ENCODE measurements at regions of chr6 and their contacts with region 1.

Region 1: DNA sequence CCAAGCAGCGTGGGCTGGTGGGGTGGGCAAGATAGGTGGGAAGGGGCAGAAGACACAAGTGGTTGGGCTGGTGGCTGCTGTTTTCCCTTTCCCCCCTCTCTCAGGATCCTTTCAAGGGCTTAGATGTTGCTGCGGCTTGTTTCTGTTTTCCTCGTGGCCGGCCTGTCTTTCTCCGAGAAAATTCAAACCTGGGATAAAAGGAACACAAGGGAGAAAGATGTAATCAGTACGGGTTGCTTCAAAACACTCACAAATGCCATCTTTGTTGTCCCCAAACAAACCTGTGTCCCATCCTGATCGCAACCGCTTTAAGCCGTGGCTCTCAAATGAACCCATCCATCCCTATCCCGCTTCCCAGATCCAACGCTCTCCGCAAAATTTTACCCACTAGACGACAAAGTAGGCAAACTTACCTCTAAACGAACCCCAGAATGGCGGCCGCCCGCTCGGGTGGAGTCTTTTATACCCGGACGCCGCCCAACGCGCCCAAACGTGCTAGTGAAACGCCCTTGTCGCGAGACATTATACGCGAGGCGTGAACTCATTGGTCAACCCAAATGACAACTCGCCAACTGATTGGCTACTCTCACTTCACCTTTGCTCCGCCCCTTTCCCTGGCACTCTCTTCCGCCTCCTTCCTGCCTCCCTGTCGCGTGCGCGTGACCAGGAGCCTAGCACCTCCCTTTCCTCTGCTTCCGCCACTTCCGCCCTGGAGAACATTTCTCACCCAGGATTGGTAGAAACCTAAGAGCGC is at the start of gene PPP1R10:
- DNase-seq: peak; percentile 100
- ATAC-seq: peak; percentile 82
- H3K4me3 ChIP-seq: peak within 1 kb of the TSS; percentile 73
- H3K27ac ChIP-seq: peak within 1 kb of the TSS; percentile 91
- H3K4me1 ChIP-seq: peaks cover 6% of the 10 kb centered on the region
- H3K27me3 ChIP-seq: no peaks in the 10 kb centered on the region
- CTCF ChIP-seq: no peak
- POLR2A ChIP-seq: peak; percentile 99
- RAD21 ChIP-seq: no peak
- total RNA-seq, gene PPP1R10: 16.1 and 18.8 TPM in 2 replicates

Region 2: DNA sequence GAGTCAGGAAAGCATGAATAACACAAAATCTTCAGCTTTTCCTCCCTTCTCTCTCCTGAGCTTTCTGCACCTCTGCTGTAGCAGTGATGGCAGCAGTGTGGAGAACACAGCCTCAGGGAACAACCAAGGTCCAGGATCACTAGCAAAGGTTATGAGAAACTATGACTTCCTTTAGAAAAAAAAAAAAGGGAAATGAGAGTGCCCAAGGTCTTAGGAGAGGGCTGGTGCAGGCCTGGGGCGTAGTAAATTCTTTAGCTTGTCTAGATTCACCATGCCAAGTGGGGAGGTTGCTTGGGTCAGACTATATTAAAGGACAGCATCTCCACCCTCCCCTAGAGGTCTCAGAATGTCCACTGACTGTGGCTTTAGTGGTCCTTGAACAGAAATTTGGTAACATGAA is 596.4 kb before region 1 on chr6:
- CTCF ChIA-PET with region 1: no interaction called
- POLR2A ChIA-PET with region 1: no interaction called
- dilution Hi-C with region 1: no loop called
- in situ Hi-C with region 1: no loop called
- intact Hi-C with region 1: no loop called
- DNase-seq: no peak
- ATAC-seq: no peak
- H3K4me3 ChIP-seq: no peak overlapping the region
- H3K27ac ChIP-seq: no peak overlapping the region
- H3K4me1 ChIP-seq: no peaks in the 10 kb centered on the region
- H3K27me3 ChIP-seq: no peaks in the 10 kb centered on the region
- CTCF ChIP-seq: no peak
- POLR2A ChIP-seq: no peak
- RAD21 ChIP-seq: no peak

Region 3: GRCh38 chr6:30508890-30509736 is 107.9 kb before region 1 on chr6:
- CTCF ChIA-PET with region 1: no interaction called
- POLR2A ChIA-PET with region 1: interaction called, 13 read pairs
- dilution Hi-C with region 1: no loop called
- in situ Hi-C with region 1: no loop called
- intact Hi-C with region 1: no loop called
- DNase-seq: peak; percentile 51
- ATAC-seq: no peak
- H3K4me3 ChIP-seq: no peak overlapping the region
- H3K27ac ChIP-seq: no peak overlapping the region
- H3K4me1 ChIP-seq: no peaks in the 10 kb centered on the region; the same call in 1 of the 2 replicates
- H3K27me3 ChIP-seq: no peaks in the 10 kb centered on the region
- CTCF ChIP-seq: no peak
- POLR2A ChIP-seq: no peak
- RAD21 ChIP-seq: no peak

Region 4: GRCh38 chr6:30600451-30600961 is 16.5 kb before region 1 on chr6:
- CTCF ChIA-PET with region 1: interaction called, 6 read pairs
- POLR2A ChIA-PET with region 1: interaction called, 14 read pairs
- dilution Hi-C with region 1: no loop called
- in situ Hi-C with region 1: no loop called
- intact Hi-C with region 1: no loop called
- DNase-seq: no peak
- ATAC-seq: no peak
- H3K4me3 ChIP-seq: no peak overlapping the region
- H3K27ac ChIP-seq: no peak overlapping the region
- H3K4me1 ChIP-seq: no peaks in the 10 kb centered on the region
- H3K27me3 ChIP-seq: no peaks in the 10 kb centered on the region
- CTCF ChIP-seq: no peak
- POLR2A ChIP-seq: no peak
- RAD21 ChIP-seq: no peak

Region 5: DNA sequence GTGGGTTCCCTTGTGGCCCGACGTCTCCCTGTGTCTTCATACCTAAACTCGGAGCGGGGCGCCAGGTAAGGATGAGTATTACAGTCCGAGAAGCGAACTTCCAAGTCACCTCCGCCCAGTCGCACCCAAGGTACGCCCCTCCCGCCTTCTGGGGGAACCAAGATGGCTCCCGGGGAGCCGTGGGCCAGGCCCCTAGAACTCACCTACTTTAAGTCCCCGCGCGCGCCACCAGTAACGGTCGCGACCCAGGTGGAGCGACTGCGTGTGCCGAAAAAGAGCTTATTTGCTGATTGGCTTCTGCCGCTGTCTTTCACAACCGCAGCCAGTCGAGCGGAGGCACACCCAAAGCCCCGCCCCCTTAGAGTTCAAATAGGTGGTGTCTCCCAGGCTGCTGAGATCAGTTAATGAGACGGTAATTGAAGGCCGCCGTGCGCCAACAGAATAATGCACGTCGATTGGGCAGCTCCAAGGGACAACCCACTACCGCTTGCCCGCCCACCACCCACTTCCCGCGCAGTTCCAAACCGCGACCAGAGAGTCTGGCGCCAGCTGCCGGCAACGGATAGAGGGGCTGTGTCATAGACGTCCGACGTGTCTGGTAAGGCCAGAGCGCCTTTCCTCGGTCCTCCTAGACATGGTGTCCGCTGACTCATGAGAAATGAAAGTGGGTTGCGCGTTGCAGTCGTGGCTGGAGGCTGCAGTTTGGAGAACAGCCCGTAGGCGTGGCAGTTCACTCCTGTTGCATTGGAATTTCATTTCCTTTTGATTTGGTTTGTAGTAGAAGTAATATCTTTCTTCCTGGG is 100.3 kb after region 1 on chr6 and contains the start of gene MDC1:
- CTCF ChIA-PET with region 1: no interaction called
- POLR2A ChIA-PET with region 1: no interaction called
- dilution Hi-C with region 1: no loop called
- in situ Hi-C with region 1: no loop called
- intact Hi-C with region 1: loop called (anchors 2 kb)
- DNase-seq: peak; percentile 100
- ATAC-seq: peak; percentile 77
- H3K4me3 ChIP-seq: peak within 1 kb of the TSS; percentile 61
- H3K27ac ChIP-seq: peak within 1 kb of the TSS; percentile 78
- H3K4me1 ChIP-seq: peaks cover 4% of the 10 kb centered on the region; the same call in 1 of the 2 replicates
- H3K27me3 ChIP-seq: no peaks in the 10 kb centered on the region
- CTCF ChIP-seq: peak; percentile 29; the same call in 1 of the 2 replicates
- POLR2A ChIP-seq: peak; percentile 64
- RAD21 ChIP-seq: no peak
- total RNA-seq, gene MDC1: 3.6 and 4.5 TPM in 2 replicates

Region 6: GRCh38 chr6:32081168-32081990 is 1464.4 kb after region 1 on chr6:
- CTCF ChIA-PET with region 1: no interaction called
- POLR2A ChIA-PET with region 1: interaction called, 23 read pairs
- dilution Hi-C with region 1: no loop called
- in situ Hi-C with region 1: no loop called
- intact Hi-C with region 1: no loop called
- DNase-seq: peak; percentile 89
- ATAC-seq: peak; percentile 89
- H3K4me3 ChIP-seq: no peak overlapping the region
- H3K27ac ChIP-seq: peak overlapping the region; percentile 9
- H3K4me1 ChIP-seq: peaks cover 26% of the 10 kb centered on the region
- H3K27me3 ChIP-seq: peaks cover 26% of the 10 kb centered on the region
- CTCF ChIP-seq: no peak
- POLR2A ChIP-seq: no peak
- RAD21 ChIP-seq: no peak

Measured in IMR-90 (cell line).